CD4-positive, alpha-beta T cell (primary cell): ENCODE measurements at regions of chr7 and their contacts with region 1.

Region 1: DNA sequence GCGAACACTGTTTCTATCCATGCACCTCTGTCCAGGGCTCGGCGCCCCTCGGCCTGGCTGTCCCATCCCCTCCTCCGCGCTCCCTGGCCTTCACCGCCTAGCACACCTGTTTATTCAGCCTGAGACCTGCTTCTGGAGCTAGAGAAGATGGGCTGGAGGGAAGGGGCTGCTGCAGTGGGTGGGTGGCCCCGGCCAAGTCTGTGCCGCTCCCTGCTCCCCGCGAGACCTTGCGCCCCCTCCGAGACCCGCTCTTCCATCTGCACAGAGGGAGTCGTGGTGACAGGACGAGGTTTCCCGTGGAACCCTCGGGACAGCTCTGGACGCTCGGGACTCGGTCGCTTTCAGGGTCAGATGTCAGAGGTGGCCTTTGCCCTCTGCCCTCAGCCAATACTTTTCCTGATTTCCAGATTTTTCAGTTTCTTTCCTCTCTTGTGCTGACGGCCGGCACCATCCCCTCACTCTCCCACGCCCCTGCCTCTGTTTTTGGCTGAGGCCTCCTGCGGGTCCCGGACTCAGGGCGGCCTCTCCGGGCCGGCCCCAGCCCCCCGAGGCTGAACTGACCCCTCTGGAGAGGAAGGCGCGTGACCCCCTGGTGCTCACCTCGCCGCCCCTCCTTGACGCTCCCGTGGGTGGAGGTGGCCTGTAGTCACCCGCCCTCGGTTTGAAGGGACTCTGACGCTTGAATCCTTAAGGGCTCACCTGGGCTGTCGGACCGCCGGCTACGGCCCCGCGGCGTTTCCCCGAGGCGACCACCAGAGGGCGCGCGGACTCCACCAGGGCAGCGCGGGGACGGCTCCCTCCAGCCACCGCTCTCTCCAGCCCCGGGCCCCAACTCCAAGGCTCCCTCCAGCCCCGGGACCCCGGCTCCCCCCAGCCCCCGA is 15.6 kb downstream of the SHH start:
- DNase-seq: peak; percentile 32 to 78 (median 60)
- ATAC-seq: peak; percentile 58
- H3K4me3 ChIP-seq: no peak overlapping the region
- H3K4me3 Mint-ChIP-seq: no peak overlapping the region
- H3K27ac ChIP-seq: no peak overlapping the region
- H3K27ac Mint-ChIP-seq: no peak overlapping the region
- H3K4me1 ChIP-seq: peaks cover 7% of the 10 kb centered on the region
- H3K4me1 Mint-ChIP-seq: no peaks in the 10 kb centered on the region
- H3K27me3 ChIP-seq: peaks cover 29 to 45% of the 10 kb centered on the region in 2 experiments
- H3K27me3 Mint-ChIP-seq: peaks cover 44% of the 10 kb centered on the region
- CTCF ChIP-seq: peak; percentile 86

Region 2: GRCh38 chr7:154517768-154518167 is 1278.9 kb before region 1 on chr7:
- CTCF ChIA-PET with region 1: no interaction called
- POLR2A ChIA-PET with region 1: no interaction called
- intact Hi-C with region 1: no loop called
- DNase-seq: no peak
- ATAC-seq: no peak
- H3K4me3 ChIP-seq: no peak overlapping the region
- H3K4me3 Mint-ChIP-seq: no peak overlapping the region
- H3K27ac ChIP-seq: no peak overlapping the region
- H3K27ac Mint-ChIP-seq: no peak overlapping the region
- H3K4me1 ChIP-seq: no peaks in the 10 kb centered on the region
- H3K4me1 Mint-ChIP-seq: no peaks in the 10 kb centered on the region
- H3K27me3 ChIP-seq: no peaks in the 10 kb centered on the region
- H3K27me3 Mint-ChIP-seq: no peaks in the 10 kb centered on the region
- CTCF ChIP-seq: no peak

Region 3: GRCh38 chr7:154960063-154960790 is 836.4 kb before region 1 on chr7:
- CTCF ChIA-PET with region 1: no interaction called
- POLR2A ChIA-PET with region 1: no interaction called
- intact Hi-C with region 1: no loop called
- DNase-seq: no peak
- ATAC-seq: no peak
- H3K4me3 ChIP-seq: no peak overlapping the region
- H3K4me3 Mint-ChIP-seq: no peak overlapping the region
- H3K27ac ChIP-seq: no peak overlapping the region
- H3K27ac Mint-ChIP-seq: no peak overlapping the region
- H3K4me1 ChIP-seq: no peaks in the 10 kb centered on the region
- H3K4me1 Mint-ChIP-seq: no peaks in the 10 kb centered on the region
- H3K27me3 ChIP-seq: no peaks in the 10 kb centered on the region
- H3K27me3 Mint-ChIP-seq: no peaks in the 10 kb centered on the region
- CTCF ChIP-seq: no peak

Region 4: DNA sequence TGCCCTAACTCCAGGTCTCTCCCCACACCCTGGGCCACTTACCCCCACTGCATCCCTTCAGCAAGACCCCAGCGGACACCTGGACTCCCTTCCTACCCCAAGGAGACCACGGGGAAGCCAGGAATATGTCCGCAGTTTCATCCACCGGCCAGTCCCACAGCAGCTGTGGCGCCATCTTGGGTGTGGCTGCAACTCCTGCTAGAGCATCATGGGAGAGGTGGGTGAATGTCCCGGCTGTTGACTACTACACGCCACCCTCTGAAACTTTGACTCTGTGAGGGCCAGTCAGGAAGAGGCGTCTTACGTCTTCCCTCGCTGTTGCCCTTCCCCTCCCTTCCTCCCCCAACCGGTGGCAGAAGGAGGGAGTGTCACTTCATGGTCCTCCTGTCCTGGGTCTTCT is 605.6 kb after region 1 on chr7:
- CTCF ChIA-PET with region 1: no interaction called
- POLR2A ChIA-PET with region 1: no interaction called
- intact Hi-C with region 1: no loop called
- DNase-seq: no peak
- ATAC-seq: no peak
- H3K4me3 ChIP-seq: no peak overlapping the region
- H3K4me3 Mint-ChIP-seq: no peak overlapping the region
- H3K27ac ChIP-seq: no peak overlapping the region
- H3K27ac Mint-ChIP-seq: no peak overlapping the region
- H3K4me1 ChIP-seq: no peaks in the 10 kb centered on the region
- H3K4me1 Mint-ChIP-seq: no peaks in the 10 kb centered on the region
- H3K27me3 ChIP-seq: no peaks in the 10 kb centered on the region
- H3K27me3 Mint-ChIP-seq: peaks cover 15% of the 10 kb centered on the region
- CTCF ChIP-seq: no peak

Region 5: DNA sequence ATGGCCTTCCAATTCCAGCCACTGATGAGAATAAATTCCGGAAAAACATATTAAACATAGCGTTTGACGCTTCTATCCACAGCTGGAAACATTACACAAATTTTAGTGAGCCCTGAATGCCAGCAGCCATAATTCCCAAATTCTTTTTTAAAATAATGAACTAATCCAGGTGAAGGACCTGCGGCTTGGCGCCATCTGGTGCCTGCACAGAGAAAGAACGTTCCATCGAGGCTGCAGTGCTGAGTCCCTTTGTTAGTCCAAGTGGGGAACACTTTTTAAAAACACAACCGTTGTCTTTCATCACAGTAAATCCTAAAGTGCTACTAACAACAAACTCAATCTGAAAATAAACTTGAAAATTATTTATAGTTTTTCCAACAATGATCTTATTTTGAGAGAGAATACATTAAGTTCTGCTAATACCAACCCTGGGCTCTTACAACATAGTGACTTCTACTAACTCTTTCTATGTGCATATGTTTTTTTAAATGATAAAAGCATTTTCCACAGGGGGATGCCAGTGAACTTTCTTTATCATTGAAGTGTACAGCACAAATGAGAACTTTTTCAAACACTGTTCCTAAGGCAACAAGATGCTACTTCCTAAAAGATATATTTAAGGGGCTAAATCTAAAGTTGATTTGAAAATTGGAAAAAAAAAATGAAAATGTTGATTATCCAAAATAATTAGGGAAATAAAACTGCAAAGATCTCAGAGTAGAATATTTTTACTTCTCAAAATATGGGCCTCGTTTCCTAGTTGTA is 677.0 kb after region 1 on chr7:
- CTCF ChIA-PET with region 1: no interaction called
- POLR2A ChIA-PET with region 1: no interaction called
- intact Hi-C with region 1: loop called in 1 of 2 experiments (anchors 5 kb)
- DNase-seq: peak in 4 of 14 experiments; percentile 7 to 36 (median 25)
- ATAC-seq: no peak
- H3K4me3 ChIP-seq: no peak overlapping the region
- H3K4me3 Mint-ChIP-seq: no peak overlapping the region
- H3K27ac ChIP-seq: no peak overlapping the region
- H3K27ac Mint-ChIP-seq: no peak overlapping the region
- H3K4me1 ChIP-seq: no peaks in the 10 kb centered on the region
- H3K4me1 Mint-ChIP-seq: no peaks in the 10 kb centered on the region
- H3K27me3 ChIP-seq: peaks cover 12 to 14% of the 10 kb centered on the region in 2 experiments
- H3K27me3 Mint-ChIP-seq: peaks cover 40% of the 10 kb centered on the region
- CTCF ChIP-seq: peak; percentile 62

Region 6: DNA sequence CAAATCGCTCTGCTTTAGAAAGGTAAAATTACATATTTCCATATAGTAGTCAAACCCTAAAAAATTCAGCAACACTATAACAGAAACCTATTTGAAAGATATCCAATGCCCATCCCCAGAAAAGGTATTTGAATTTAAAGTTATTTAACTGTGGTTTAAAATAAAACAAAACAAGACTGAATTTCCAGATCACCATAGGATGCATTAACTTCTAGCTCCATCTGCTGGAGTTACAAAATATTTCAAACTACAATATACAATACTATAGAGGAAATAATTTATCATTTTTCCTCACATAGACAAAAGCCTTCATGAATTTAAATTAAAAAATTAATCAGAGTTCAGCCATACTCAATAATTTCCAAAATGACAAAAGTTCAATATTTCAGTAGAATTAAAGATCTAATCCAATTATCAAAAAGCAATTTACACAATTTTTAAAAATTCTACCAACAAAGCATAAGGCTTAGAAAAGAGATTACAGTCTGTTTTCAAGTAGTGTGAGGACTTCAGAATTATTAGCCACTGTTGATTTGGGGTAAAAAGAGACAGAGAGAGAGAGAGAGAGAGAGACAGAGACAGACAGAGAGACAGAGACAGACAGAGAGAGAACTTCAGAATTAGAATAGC is 1020.4 kb after region 1 on chr7:
- CTCF ChIA-PET with region 1: no interaction called
- POLR2A ChIA-PET with region 1: no interaction called
- intact Hi-C with region 1: loop called (anchors 2 to 5 kb)
- DNase-seq: peak in 2 of 14 experiments; percentile 15 to 29
- ATAC-seq: no peak
- H3K4me3 ChIP-seq: no peak overlapping the region
- H3K4me3 Mint-ChIP-seq: no peak overlapping the region
- H3K27ac ChIP-seq: no peak overlapping the region
- H3K27ac Mint-ChIP-seq: no peak overlapping the region
- H3K4me1 ChIP-seq: no peaks in the 10 kb centered on the region
- H3K4me1 Mint-ChIP-seq: no peaks in the 10 kb centered on the region
- H3K27me3 ChIP-seq: no peaks in the 10 kb centered on the region
- H3K27me3 Mint-ChIP-seq: no peaks in the 10 kb centered on the region
- CTCF ChIP-seq: peak; percentile 56

Region 7: DNA sequence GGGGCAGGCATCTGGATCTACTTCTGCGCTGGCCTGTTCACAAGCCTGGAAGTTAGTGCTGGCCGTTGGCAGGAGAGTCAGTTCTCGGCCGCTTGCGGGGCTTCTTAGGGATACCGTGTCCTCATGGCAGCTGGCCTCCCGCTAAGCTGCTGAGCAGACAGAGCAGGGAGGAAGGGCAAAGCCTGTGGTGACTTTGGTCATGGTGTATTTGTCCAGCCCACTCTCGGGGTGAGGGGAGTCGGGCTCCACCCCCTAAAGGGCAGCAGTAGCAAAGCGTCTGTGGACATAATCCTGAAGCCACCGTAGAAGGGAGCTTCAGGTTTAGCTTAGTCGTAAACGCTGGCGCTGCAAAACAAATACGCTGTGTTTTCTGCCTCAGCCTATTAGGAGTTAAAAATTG is 1354.3 kb after region 1 on chr7:
- CTCF ChIA-PET with region 1: no interaction called
- POLR2A ChIA-PET with region 1: no interaction called
- intact Hi-C with region 1: no loop called
- DNase-seq: no peak
- ATAC-seq: no peak
- H3K4me3 ChIP-seq: no peak overlapping the region
- H3K4me3 Mint-ChIP-seq: no peak overlapping the region
- H3K27ac ChIP-seq: no peak overlapping the region
- H3K27ac Mint-ChIP-seq: no peak overlapping the region
- H3K4me1 ChIP-seq: peaks cover 45% of the 10 kb centered on the region
- H3K4me1 Mint-ChIP-seq: peaks cover 86% of the 10 kb centered on the region
- H3K27me3 ChIP-seq: no peaks in the 10 kb centered on the region
- H3K27me3 Mint-ChIP-seq: no peaks in the 10 kb centered on the region
- CTCF ChIP-seq: no peak

Region 8: GRCh38 chr7:157273208-157274093 is 1476.8 kb after region 1 on chr7:
- CTCF ChIA-PET with region 1: no interaction called
- POLR2A ChIA-PET with region 1: no interaction called
- intact Hi-C with region 1: loop called in 1 of 2 experiments (anchors 10 kb)
- DNase-seq: peak; percentile 33 to 82 (median 52)
- ATAC-seq: peak; percentile 87
- H3K4me3 ChIP-seq: no peak overlapping the region
- H3K4me3 Mint-ChIP-seq: no peak overlapping the region
- H3K27ac ChIP-seq: no peak overlapping the region
- H3K27ac Mint-ChIP-seq: no peak overlapping the region
- H3K4me1 ChIP-seq: peaks cover 41% of the 10 kb centered on the region
- H3K4me1 Mint-ChIP-seq: peaks cover 20% of the 10 kb centered on the region
- H3K27me3 ChIP-seq: peaks cover 2 to 5% of the 10 kb centered on the region in 2 experiments
- H3K27me3 Mint-ChIP-seq: peaks cover 3% of the 10 kb centered on the region
- CTCF ChIP-seq: peak; percentile 95